ENCODE measurements at regions of chr19 and their contacts with region 1.

Region 1: GRCh38 chr19:56121180-56122167 is at the start of gene ZNF787:
- DNase-seq: peak; percentile 93 to 100
- H3K4me3 ChIP-seq: peak within 1 kb of the TSS; percentile 94
- H3K27ac ChIP-seq: peak within 1 kb of the TSS; percentile 81
- H3K4me1 ChIP-seq: peaks cover 10% of the 10 kb centered on the region
- H3K27me3 ChIP-seq: no peaks in the 10 kb centered on the region
- CTCF ChIP-seq: no peak
- total RNA-seq, gene ZNF787: 51.4 and 51.5 TPM in 2 replicates

Region 2: GRCh38 chr19:56090931-56091490 is 30.5 kb before region 1 on chr19:
- CTCF ChIA-PET with region 1: no interaction called
- POLR2A ChIA-PET with region 1: no interaction called
- intact Hi-C with region 1: loop called (anchors 1 kb)
- DNase-seq: peak; percentile 83 to 99
- H3K4me3 ChIP-seq: peak overlapping the region; percentile 64
- H3K27ac ChIP-seq: peak overlapping the region; percentile 100
- H3K4me1 ChIP-seq: peaks cover 39% of the 10 kb centered on the region
- H3K27me3 ChIP-seq: no peaks in the 10 kb centered on the region
- CTCF ChIP-seq: no peak

Region 3: DNA sequence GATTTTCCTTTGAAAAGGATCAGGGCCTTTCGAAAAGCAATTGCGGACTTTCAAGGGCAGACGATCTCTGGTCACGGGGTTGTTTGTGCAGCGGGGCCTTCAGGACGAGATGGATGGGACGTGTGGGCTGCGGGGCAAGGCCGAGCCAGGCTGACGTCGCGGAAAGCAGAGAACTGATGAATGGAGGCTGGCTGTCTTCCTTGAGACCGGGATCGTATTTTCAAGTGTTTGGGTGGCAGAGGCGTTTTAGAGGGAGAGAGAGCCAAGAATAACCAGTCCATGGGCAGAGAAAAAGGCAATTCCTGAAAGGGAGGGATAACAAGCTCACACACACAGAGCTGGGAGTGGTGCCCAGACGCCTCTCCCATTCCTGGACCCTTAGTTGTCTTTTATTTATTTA is 859.4 kb after region 1 on chr19:
- CTCF ChIA-PET with region 1: no interaction called
- POLR2A ChIA-PET with region 1: no interaction called
- intact Hi-C with region 1: no loop called
- DNase-seq: no peak
- H3K4me3 ChIP-seq: no peak overlapping the region
- H3K27ac ChIP-seq: no peak overlapping the region
- H3K4me1 ChIP-seq: no peaks in the 10 kb centered on the region
- H3K27me3 ChIP-seq: peaks cover 83% of the 10 kb centered on the region
- CTCF ChIP-seq: no peak